ENCODE measurements at regions of chrX and their contacts with region 1.

Region 1: DNA sequence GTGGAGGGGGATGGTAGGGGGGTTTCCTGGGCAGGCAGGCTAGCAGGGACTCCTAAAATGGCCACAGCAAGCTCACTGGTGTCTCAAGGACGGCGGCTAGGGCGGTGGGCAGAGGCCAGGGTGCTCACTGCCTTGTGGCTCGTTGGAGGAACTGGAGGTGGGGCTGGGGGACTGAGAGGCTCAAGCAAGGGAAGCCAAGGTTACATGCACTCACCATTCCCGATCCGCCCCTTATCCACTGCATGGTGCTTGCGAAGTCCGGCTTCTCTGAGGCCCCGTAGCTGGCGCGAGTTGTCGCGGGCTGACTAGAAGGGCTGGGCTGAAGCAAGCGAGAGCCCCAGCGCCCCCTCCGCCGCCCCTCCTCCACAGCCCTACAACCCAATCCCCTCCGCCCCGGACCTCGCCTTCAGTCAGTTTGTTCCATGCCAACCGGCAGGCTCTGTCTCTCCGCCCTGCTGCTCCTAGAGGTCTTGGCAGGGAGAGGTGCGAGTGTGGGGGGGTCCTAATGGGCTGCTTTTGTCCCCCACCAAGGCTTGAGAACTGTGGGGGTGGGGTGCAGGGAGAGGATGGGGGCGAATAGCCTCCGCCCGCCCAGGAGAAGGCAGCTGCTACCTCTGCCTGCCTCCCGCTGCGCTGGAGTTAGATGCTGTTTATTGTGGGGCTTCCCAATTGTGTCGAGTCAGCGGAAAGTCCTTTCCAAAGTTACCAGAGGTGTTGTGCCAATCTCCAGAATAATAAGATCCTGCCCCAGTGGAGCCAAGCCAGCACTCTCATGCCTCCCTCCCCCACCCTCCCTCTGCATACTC is at the start of gene ARHGEF9:
- DNase-seq: peak; percentile 49 to 78
- ATAC-seq: peak; percentile 34
- H3K4me3 ChIP-seq: peak within 1 kb of the TSS; percentile 23 to 38
- H3K27ac ChIP-seq: no peak within 1 kb of the TSS
- H3K4me1 ChIP-seq: no peaks in the 10 kb centered on the region
- H3K27me3 ChIP-seq: no peaks in the 10 kb centered on the region
- total RNA-seq, gene ARHGEF9: 47.6 to 142 TPM

Region 2: GRCh38 chrX:63740382-63740781 is 44.7 kb before region 1 on chrX:
- intact Hi-C with region 1: loop called in 1 of 2 experiments (anchors 5 kb)
- DNase-seq: no peak
- ATAC-seq: no peak
- H3K4me3 ChIP-seq: no peak overlapping the region
- H3K27ac ChIP-seq: no peak overlapping the region
- H3K4me1 ChIP-seq: peaks cover 0 to 6% of the 10 kb centered on the region in 2 donors
- H3K27me3 ChIP-seq: no peaks in the 10 kb centered on the region

Region 3: GRCh38 chrX:63917296-63917695 is 132.2 kb after region 1 on chrX:
- intact Hi-C with region 1: no loop called
- DNase-seq: no peak
- ATAC-seq: no peak
- H3K4me3 ChIP-seq: no peak overlapping the region
- H3K27ac ChIP-seq: no peak overlapping the region
- H3K4me1 ChIP-seq: no peaks in the 10 kb centered on the region
- H3K27me3 ChIP-seq: no peaks in the 10 kb centered on the region

Measured in aorta (tissue), 5 donors.